PC-3 (cell line): ENCODE measurements at regions of chr1 and their contacts with region 1.

Region 1: GRCh38 chr1:229685149-229685548 is 59.1 kb downstream of the URB2 start:
- DNase-seq: no peak
- ATAC-seq: no peak
- H3K4me3 ChIP-seq: no peak overlapping the region
- H3K27ac ChIP-seq: no peak overlapping the region
- H3K4me1 ChIP-seq: no peaks in the 10 kb centered on the region
- H3K27me3 ChIP-seq: no peaks in the 10 kb centered on the region
- CTCF ChIP-seq: no peak

Region 2: DNA sequence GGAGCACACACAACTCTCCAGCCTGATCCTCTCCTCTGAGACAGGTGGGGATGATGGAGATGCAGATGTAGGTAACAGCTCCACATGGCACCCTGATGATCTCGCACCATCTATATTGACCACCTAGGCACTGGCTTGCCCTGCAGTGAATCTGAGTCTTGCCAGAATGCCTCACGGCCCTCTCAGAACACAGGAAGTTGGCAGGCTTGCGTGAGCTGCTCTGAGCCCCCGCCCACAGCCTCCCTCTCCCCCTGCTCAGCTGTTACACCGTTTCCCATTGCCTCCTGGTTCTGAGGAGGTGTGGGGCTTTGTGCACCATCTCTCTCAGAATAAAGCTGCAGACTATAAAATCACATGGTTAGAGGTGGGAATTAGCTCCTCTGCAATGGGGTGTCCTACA is 11.1 kb before region 1 on chr1:
- CTCF ChIA-PET with region 1: no interaction called
- POLR2A ChIA-PET with region 1: no interaction called
- intact Hi-C with region 1: loop called (anchors 1 kb)
- DNase-seq: no peak
- ATAC-seq: no peak
- H3K4me3 ChIP-seq: no peak overlapping the region
- H3K27ac ChIP-seq: no peak overlapping the region
- H3K4me1 ChIP-seq: no peaks in the 10 kb centered on the region
- H3K27me3 ChIP-seq: no peaks in the 10 kb centered on the region
- CTCF ChIP-seq: no peak